ENCODE measurements at regions of chr19 and their contacts with region 1.

Region 1: GRCh38 chr19:35495107-35496064 is 5.1 kb upstream of the KRTDAP start:
- DNase-seq: peak; percentile 55
- ATAC-seq: peak; percentile 100
- H3K4me3 ChIP-seq: no peak overlapping the region
- H3K27ac ChIP-seq: no peak overlapping the region
- H3K4me1 ChIP-seq: no peaks in the 10 kb centered on the region
- H3K27me3 ChIP-seq: peaks cover 36% of the 10 kb centered on the region
- CTCF ChIP-seq: peak; percentile 88
- POLR2A ChIP-seq: no peak
- RAD21 ChIP-seq: peak; percentile 70

Region 2: GRCh38 chr19:35269421-35270117 is 225.8 kb before region 1 on chr19:
- CTCF ChIA-PET with region 1: no interaction called
- POLR2A ChIA-PET with region 1: no interaction called
- dilution Hi-C with region 1: no loop called
- in situ Hi-C with region 1: no loop called
- intact Hi-C with region 1: loop called (anchors 1 kb)
- DNase-seq: peak; percentile 75
- ATAC-seq: peak; percentile 62
- H3K4me3 ChIP-seq: peak overlapping the region; percentile 73
- H3K27ac ChIP-seq: peak overlapping the region; percentile 78
- H3K4me1 ChIP-seq: peaks cover 7% of the 10 kb centered on the region
- H3K27me3 ChIP-seq: no peaks in the 10 kb centered on the region
- CTCF ChIP-seq: peak; percentile 56
- POLR2A ChIP-seq: no peak
- RAD21 ChIP-seq: peak; percentile 48

Region 3: DNA sequence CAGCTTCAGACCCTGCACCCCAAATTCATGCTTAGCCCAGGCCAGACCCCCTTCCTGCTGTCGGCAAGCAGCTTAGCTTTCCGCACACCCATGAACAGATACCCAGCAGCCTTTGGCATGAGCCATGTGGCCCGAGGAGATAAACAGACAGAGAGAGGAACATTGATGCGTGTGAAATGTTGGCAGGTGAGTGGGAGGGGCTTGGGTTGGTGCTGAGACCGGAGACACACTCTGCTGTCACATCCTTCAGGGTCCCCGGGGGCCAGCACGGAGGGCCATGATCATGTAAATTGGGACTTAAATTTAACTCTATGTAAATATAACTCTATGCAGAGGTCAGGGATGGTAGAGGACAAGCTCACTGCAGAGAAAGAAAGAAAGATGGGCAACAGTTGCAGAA is 164.9 kb before region 1 on chr19:
- CTCF ChIA-PET with region 1: no interaction called
- POLR2A ChIA-PET with region 1: no interaction called
- dilution Hi-C with region 1: no loop called
- in situ Hi-C with region 1: no loop called
- intact Hi-C with region 1: no loop called
- DNase-seq: no peak
- ATAC-seq: no peak
- H3K4me3 ChIP-seq: no peak overlapping the region
- H3K27ac ChIP-seq: no peak overlapping the region
- H3K4me1 ChIP-seq: no peaks in the 10 kb centered on the region
- H3K27me3 ChIP-seq: peaks cover 15% of the 10 kb centered on the region
- CTCF ChIP-seq: no peak
- POLR2A ChIP-seq: no peak
- RAD21 ChIP-seq: no peak

Region 4: GRCh38 chr19:35460608-35461007 is 34.8 kb before region 1 on chr19:
- CTCF ChIA-PET with region 1: interaction called, 10 read pairs
- POLR2A ChIA-PET with region 1: no interaction called
- dilution Hi-C with region 1: no loop called
- in situ Hi-C with region 1: no loop called
- intact Hi-C with region 1: no loop called
- DNase-seq: no peak
- ATAC-seq: no peak
- H3K4me3 ChIP-seq: no peak overlapping the region
- H3K27ac ChIP-seq: no peak overlapping the region
- H3K4me1 ChIP-seq: no peaks in the 10 kb centered on the region
- H3K27me3 ChIP-seq: peaks cover 4% of the 10 kb centered on the region; the same call in 1 of the 2 replicates
- CTCF ChIP-seq: no peak
- POLR2A ChIP-seq: no peak
- RAD21 ChIP-seq: no peak

Region 5: GRCh38 chr19:35509861-35510625 is 14.7 kb after region 1 on chr19:
- CTCF ChIA-PET with region 1: interaction called, 11 read pairs
- POLR2A ChIA-PET with region 1: no interaction called
- dilution Hi-C with region 1: no loop called
- in situ Hi-C with region 1: no loop called
- intact Hi-C with region 1: no loop called
- DNase-seq: peak; percentile 22
- ATAC-seq: peak; percentile 71
- H3K4me3 ChIP-seq: peak overlapping the region; percentile 25
- H3K27ac ChIP-seq: no peak overlapping the region
- H3K4me1 ChIP-seq: peaks cover 5% of the 10 kb centered on the region; the same call in 1 of the 2 replicates
- H3K27me3 ChIP-seq: peaks cover 71% of the 10 kb centered on the region
- CTCF ChIP-seq: peak; percentile 78
- POLR2A ChIP-seq: no peak
- RAD21 ChIP-seq: peak; percentile 63

Region 6: DNA sequence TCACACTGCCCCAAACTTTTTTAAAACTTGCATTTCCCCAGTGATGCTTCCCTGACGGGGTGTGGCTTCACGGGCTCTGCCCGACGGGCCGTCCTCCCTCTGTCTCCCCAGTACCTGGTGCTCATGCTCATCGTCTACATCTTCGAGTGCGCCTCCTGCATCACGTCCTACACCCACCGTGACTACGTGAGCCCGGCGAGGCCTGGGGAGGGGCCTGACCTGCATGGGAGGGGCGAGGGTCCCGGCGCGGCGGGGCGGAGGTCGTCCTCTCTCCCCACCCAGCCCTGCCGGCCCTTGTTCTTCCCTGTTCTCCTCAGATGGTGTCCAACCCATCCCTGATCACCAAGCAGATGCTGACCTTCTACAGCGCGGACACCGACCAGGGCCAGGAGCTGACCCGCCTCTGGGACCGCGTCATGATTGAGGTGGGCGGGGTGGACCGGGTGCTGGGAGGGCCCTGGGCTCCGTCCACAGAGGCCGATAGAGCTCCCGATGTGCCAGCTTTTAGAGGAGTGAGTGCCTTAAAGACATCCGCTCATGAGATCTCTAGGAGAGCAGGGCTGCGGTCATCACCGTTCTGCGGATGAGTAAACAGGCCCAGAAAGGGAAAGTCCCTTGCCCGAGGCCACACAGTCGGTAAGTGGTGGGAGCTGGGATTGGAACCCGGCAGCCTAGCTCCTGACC is 177.9 kb after region 1 on chr19:
- CTCF ChIA-PET with region 1: no interaction called
- POLR2A ChIA-PET with region 1: no interaction called
- dilution Hi-C with region 1: no loop called
- in situ Hi-C with region 1: no loop called
- intact Hi-C with region 1: no loop called
- DNase-seq: peak; percentile 62
- ATAC-seq: peak; percentile 98
- H3K4me3 ChIP-seq: peak overlapping the region; percentile 36
- H3K27ac ChIP-seq: no peak overlapping the region
- H3K4me1 ChIP-seq: no peaks in the 10 kb centered on the region
- H3K27me3 ChIP-seq: peaks cover 7% of the 10 kb centered on the region; the same call in 1 of the 2 replicates
- CTCF ChIP-seq: no peak
- POLR2A ChIP-seq: no peak
- RAD21 ChIP-seq: no peak

Measured in IMR-90 (cell line).